CD4-positive, alpha-beta memory T cell (primary cell): ENCODE measurements at regions of chr16 and their contacts with region 1.

Region 1: DNA sequence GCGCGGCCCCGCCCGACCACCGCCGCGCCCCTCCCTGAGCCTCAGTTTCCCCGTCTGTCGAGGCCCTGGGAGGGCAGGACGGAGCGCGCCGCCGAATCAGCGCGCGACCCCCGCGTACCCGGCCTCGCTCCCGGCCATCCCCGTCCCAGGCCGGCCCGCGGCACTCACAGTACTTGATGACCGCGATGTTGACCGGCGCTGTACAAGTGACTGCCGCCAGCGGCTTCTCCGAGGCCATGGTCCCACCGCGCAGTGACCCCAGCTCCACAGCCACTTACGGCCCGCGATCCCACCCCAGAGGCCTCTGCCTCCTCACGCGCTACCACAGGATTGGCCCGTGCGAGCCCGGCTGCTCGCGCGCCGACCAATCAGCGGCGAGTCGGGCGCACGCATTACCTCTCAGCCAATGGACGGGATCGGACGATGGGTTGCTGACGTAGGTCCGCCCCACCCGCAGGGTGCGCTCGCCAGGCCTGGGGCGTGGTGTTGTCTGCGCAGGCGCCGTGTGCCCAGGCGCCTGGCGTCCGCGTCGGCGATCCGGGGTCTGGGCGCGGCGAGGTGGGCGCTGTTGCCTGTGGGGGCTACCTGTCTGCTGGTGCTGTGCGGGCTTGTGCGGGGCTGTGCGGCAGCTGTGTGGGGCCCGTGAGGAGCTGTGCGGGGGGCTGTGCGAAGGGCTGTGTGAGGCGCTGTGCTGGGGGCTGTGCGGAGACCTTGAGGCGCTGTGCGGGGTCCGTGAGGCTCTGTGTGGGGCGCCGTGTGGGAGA is at the start of gene MVD:
- DNase-seq: peak; percentile 93 to 96 (median 95)
- H3K4me3 ChIP-seq: peak within 1 kb of the TSS; percentile 65 to 95
- H3K4me3 Mint-ChIP-seq: peak within 1 kb of the TSS; percentile 91 to 95 (median 94)
- H3K27ac ChIP-seq: peak within 1 kb of the TSS; percentile 83
- H3K27ac Mint-ChIP-seq: peak within 1 kb of the TSS; percentile 80 to 98 (median 97)
- H3K4me1 ChIP-seq: peaks cover 16% of the 10 kb centered on the region
- H3K4me1 Mint-ChIP-seq: peaks cover 11 to 22% (median 15%) of the 10 kb centered on the region in 4 donors
- H3K27me3 ChIP-seq: no peaks in the 10 kb centered on the region
- H3K27me3 Mint-ChIP-seq: no peaks in the 10 kb centered on the region
- total RNA-seq, gene MVD: 49.2 to 57.0 TPM

Region 2: GRCh38 chr16:88550246-88550661 is 112.8 kb before region 1 on chr16:
- CTCF ChIA-PET with region 1: no interaction called
- POLR2A ChIA-PET with region 1: no interaction called
- intact Hi-C with region 1: no loop called
- DNase-seq: peak in 1 of 5 donors; percentile 37
- H3K4me3 ChIP-seq: peak overlapping the region in 1 of 2 donors; percentile 14
- H3K4me3 Mint-ChIP-seq: peak overlapping the region in 2 of 8 donors; percentile 54 to 79
- H3K27ac ChIP-seq: no peak overlapping the region
- H3K27ac Mint-ChIP-seq: peak overlapping the region in 1 of 7 donors; percentile 52
- H3K4me1 ChIP-seq: peaks cover 12% of the 10 kb centered on the region
- H3K4me1 Mint-ChIP-seq: peaks cover 0 to 19% (median 7%) of the 10 kb centered on the region in 4 donors
- H3K27me3 ChIP-seq: no peaks in the 10 kb centered on the region
- H3K27me3 Mint-ChIP-seq: peaks cover 3 to 4% of the 10 kb centered on the region in 2 donors

Region 3: GRCh38 chr16:88633684-88634140 is 29.3 kb before region 1 on chr16:
- CTCF ChIA-PET with region 1: interaction called, 3 read pairs
- POLR2A ChIA-PET with region 1: interaction called, 12 read pairs
- intact Hi-C with region 1: no loop called
- DNase-seq: peak; percentile 52 to 77 (median 68)
- H3K4me3 ChIP-seq: peak overlapping the region in 1 of 2 donors; percentile 53
- H3K4me3 Mint-ChIP-seq: peak overlapping the region; percentile 69 to 85 (median 78)
- H3K27ac ChIP-seq: peak overlapping the region; percentile 62
- H3K27ac Mint-ChIP-seq: peak overlapping the region; percentile 66 to 93 (median 79)
- H3K4me1 ChIP-seq: peaks cover 42% of the 10 kb centered on the region
- H3K4me1 Mint-ChIP-seq: peaks cover 14 to 44% (median 28%) of the 10 kb centered on the region in 4 donors
- H3K27me3 ChIP-seq: peaks cover 2% of the 10 kb centered on the region
- H3K27me3 Mint-ChIP-seq: peaks cover 0 to 6% of the 10 kb centered on the region in 2 donors

Region 4: DNA sequence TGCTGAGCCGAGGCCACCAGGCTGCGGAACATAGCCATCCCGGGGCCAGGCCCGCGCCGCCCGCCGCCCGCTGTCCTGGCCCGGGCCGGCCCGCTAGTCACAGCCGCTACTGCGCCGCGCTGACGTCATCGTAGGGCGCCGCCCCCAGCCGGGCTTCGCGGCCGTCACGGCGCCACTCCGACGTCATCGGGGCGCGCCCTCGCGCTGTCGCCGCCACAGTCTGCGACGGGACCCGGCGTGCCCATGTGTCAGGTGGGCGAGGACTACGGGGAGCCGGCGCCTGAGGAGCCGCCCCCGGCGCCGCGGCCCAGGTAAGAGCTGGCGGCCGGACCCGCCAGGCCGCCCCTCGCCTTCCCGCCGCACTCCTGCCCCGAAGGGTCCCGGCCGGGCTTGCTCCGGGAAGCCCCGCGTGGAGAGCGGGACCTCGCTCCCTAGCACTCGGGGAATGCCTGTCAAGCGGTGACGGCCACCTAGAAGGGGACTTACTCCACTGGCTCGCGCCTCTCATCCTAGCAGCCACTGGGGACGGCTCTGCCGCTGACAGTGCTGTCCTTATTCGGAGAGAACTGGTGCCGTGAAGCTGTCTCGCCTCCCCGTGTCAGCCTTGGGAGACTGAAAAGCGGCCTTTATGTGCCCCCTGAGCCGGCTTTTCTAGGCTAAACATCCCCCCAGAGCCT is 43.4 kb after region 1 on chr16 and contains the starts of genes CTU2 and RNF166:
- CTCF ChIA-PET with region 1: no interaction called
- POLR2A ChIA-PET with region 1: interaction called, 53 read pairs
- intact Hi-C with region 1: loop called (anchors 1 kb)
- DNase-seq: peak; percentile 90 to 94 (median 91)
- H3K4me3 ChIP-seq: peak within 1 kb of the TSS; percentile 95 to 98
- H3K4me3 Mint-ChIP-seq: peak within 1 kb of the TSS; percentile 93 to 96 (median 96)
- H3K27ac ChIP-seq: peak within 1 kb of the TSS; percentile 85
- H3K27ac Mint-ChIP-seq: peak within 1 kb of the TSS; percentile 97 to 99 (median 98)
- H3K4me1 ChIP-seq: peaks cover 50% of the 10 kb centered on the region
- H3K4me1 Mint-ChIP-seq: peaks cover 20 to 62% (median 39%) of the 10 kb centered on the region in 4 donors
- H3K27me3 ChIP-seq: no peaks in the 10 kb centered on the region
- H3K27me3 Mint-ChIP-seq: no peaks in the 10 kb centered on the region
- total RNA-seq, gene CTU2: 20.4 to 21.1 TPM
- total RNA-seq, gene RNF166: 129 to 137 TPM